WTC11 (cell line): ENCODE measurements at regions of chr14 and their contacts with region 1.

Region 1: GRCh38 chr14:23379366-23380196 is 2.7 kb downstream of the CMTM5 start:
- DNase-seq: peak; percentile 76
- ATAC-seq: peak; percentile 63
- H3K4me3 Mint-ChIP-seq: no peak overlapping the region
- H3K27ac Mint-ChIP-seq: no peak overlapping the region
- H3K4me1 Mint-ChIP-seq: peaks cover 11% of the 10 kb centered on the region
- H3K27me3 Mint-ChIP-seq: peaks cover 59% of the 10 kb centered on the region
- CTCF ChIP-seq: peak; percentile 93

Region 2: DNA sequence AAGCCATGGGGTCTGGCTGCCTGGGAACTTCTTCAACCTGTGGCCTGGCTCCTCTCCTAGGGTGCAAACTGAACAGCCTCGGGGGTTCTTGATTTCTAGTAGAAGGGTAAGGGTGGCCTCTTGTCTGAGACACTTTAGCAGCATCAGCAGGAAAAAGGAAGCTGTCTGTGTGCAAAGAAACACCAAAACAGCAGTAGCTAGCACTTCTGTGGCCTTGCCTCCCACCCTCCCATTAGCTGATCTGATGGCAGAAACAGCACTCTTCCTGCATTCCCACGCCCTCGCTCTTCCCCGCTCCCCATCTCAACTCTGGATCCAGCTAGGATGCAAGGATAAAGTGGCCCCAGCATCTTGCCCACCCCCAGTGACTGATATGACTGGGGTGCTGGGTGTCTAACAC is 216.8 kb before region 1 on chr14:
- CTCF ChIA-PET with region 1: no interaction called
- POLR2A ChIA-PET with region 1: no interaction called
- DNase-seq: no peak
- ATAC-seq: no peak
- H3K4me3 Mint-ChIP-seq: no peak overlapping the region
- H3K27ac Mint-ChIP-seq: peak overlapping the region; percentile 97
- H3K4me1 Mint-ChIP-seq: peaks cover 50% of the 10 kb centered on the region
- H3K27me3 Mint-ChIP-seq: no peaks in the 10 kb centered on the region
- CTCF ChIP-seq: no peak

Region 3: DNA sequence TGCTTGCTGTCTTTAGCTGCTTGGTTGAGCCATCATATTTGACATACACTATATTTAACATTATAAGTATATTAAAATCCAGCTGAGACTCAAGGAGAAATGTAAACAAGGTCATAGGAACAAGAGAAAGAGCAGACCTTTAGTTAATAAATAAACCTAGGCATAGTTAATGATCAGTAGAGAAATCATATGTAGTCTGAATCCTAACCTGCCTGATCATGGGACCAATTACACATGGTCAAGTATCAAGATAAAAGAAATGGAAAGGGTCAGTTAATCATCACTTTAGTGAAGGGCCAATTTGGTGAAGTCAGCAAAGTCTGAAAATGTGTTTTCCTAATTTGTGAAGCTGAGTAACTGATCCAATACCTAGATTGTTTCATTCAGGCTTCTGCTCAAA is 134.3 kb before region 1 on chr14:
- CTCF ChIA-PET with region 1: no interaction called
- POLR2A ChIA-PET with region 1: no interaction called
- DNase-seq: no peak
- ATAC-seq: no peak
- H3K4me3 Mint-ChIP-seq: no peak overlapping the region
- H3K27ac Mint-ChIP-seq: no peak overlapping the region
- H3K4me1 Mint-ChIP-seq: peaks cover 5% of the 10 kb centered on the region
- H3K27me3 Mint-ChIP-seq: no peaks in the 10 kb centered on the region
- CTCF ChIP-seq: no peak

Region 4: DNA sequence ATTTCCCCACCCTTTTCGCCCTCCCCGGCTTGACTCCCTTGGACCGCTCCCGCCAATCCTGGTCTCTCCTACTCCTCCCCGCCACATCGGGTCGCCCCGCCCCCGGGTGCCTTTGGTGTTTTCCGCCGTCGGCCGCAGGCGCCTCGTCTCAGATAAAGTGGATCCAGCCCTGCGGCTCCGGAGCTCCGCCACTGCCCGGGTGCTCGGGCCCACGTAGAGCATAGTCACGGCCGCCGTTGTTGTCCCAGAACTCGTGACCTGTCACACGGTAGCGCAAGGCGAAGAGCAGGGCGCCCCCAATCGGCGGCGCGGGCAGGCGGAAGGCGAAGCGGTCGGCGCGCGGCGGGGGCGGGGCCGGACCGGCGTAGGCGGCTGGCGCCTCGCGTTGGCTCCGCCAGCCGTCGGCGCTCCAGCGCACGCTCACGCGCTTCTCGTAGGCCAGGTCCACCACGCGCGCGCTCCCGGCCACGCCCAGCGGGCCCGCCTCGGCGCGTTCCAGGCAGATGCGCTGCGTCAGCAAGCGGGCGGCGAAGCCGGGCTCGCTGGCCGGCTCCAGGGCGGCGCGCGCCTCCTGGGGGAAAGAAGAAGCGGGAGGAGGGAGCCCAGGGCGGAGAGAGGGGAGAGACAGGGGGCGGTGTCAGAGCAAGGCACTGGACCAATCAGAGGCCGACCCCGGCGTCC is 78.2 kb before region 1 on chr14:
- CTCF ChIA-PET with region 1: interaction called, 18 read pairs
- POLR2A ChIA-PET with region 1: interaction called, 3 read pairs
- DNase-seq: peak; percentile 98
- ATAC-seq: peak; percentile 83
- H3K4me3 Mint-ChIP-seq: peak overlapping the region; percentile 85
- H3K27ac Mint-ChIP-seq: peak overlapping the region; percentile 91
- H3K4me1 Mint-ChIP-seq: peaks cover 10% of the 10 kb centered on the region
- H3K27me3 Mint-ChIP-seq: peaks cover 63% of the 10 kb centered on the region
- CTCF ChIP-seq: peak; percentile 60; the same call in 1 of the 2 replicates

Region 5: DNA sequence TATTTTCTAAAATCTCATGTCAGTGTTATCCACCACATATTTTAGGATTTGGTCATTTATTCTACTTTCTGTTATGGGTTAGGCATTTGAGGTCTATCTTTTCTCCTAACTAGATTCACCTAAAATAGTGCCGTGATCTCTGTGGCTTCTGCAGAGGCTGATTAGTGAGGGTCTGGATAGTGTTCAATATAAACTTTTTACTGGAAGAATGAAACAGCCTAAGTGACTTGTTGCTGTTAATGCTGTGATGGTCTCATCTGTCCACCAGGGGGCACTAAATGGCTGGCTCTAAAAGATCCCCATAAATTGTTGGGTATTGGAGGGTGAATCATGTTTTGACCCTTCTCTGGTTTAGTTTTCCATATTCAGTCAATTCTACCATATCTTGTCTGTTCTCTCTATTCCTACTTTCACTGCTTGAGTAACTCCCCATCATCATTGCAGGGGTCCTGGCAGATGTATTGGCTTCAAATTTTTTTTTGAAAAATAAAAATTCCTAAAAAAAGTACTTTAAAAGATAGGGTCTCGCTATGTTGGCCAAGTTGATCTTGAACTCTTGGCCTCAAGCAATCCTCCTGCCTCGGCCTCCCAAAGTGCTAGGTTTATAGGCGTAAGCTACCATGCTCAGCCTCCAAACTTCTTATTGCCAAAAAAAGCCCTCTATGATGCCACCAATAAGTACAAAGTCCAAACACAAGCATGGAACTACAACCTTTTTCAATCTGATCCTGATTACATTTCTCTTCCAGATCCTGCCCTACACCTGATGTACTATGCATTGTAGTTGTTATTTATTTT is 51.4 kb before region 1 on chr14:
- CTCF ChIA-PET with region 1: interaction called, 42 read pairs
- POLR2A ChIA-PET with region 1: interaction called, 8 read pairs
- DNase-seq: peak; percentile 72
- ATAC-seq: peak; percentile 70
- H3K4me3 Mint-ChIP-seq: no peak overlapping the region
- H3K27ac Mint-ChIP-seq: no peak overlapping the region
- H3K4me1 Mint-ChIP-seq: peaks cover 3% of the 10 kb centered on the region
- H3K27me3 Mint-ChIP-seq: no peaks in the 10 kb centered on the region; the same call in 1 of the 2 replicates
- CTCF ChIP-seq: peak; percentile 76

Region 6: GRCh38 chr14:23366426-23366921 is 13.1 kb before region 1 on chr14:
- CTCF ChIA-PET with region 1: interaction called, 95 read pairs
- POLR2A ChIA-PET with region 1: interaction called, 4 read pairs
- DNase-seq: peak; percentile 93
- ATAC-seq: peak; percentile 63
- H3K4me3 Mint-ChIP-seq: peak overlapping the region; percentile 71
- H3K27ac Mint-ChIP-seq: peak overlapping the region; percentile 75
- H3K4me1 Mint-ChIP-seq: peaks cover 27% of the 10 kb centered on the region
- H3K27me3 Mint-ChIP-seq: peaks cover 51% of the 10 kb centered on the region
- CTCF ChIP-seq: no peak

Region 7: DNA sequence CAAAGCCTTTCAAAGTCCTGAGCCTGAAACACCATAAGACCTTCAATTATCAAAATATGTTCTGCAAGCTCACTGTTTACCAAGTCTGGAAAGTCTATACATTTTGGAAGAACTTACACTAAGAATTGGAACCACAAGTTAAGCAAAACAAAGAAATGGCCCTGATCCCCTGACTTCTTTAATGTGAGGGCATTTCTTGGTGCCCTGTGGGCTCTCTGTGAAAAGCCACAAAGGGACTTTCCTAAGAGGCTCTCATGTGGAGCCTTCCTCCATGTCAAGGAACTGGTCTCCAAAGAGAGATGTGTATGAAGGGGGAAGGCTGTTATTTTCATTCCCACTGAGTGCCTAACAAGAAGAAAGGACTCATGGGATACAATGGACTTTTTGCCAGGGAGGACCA is 42.0 kb after region 1 on chr14:
- CTCF ChIA-PET with region 1: interaction called, 10 read pairs
- POLR2A ChIA-PET with region 1: no interaction called
- DNase-seq: no peak
- ATAC-seq: no peak
- H3K4me3 Mint-ChIP-seq: no peak overlapping the region
- H3K27ac Mint-ChIP-seq: no peak overlapping the region
- H3K4me1 Mint-ChIP-seq: no peaks in the 10 kb centered on the region
- H3K27me3 Mint-ChIP-seq: peaks cover 23% of the 10 kb centered on the region
- CTCF ChIP-seq: no peak